Heart left ventricle (tissue), 16 donors: ENCODE measurements at regions of chr1 and their contacts with region 1.

Region 1: GRCh38 chr1:166307261-166308188 is 140.7 kb upstream of the FAM78B start:
- DNase-seq: peak; percentile 56 to 81 (median 67)
- ATAC-seq: peak; percentile 96 to 98 (median 98)
- H3K4me3 ChIP-seq: peak overlapping the region in 2 of 12 donors; percentile 18 to 38
- H3K27ac ChIP-seq: peak overlapping the region; percentile 65 to 89 (median 81)
- H3K4me1 ChIP-seq: peaks cover 0 to 5% (median 0%) of the 10 kb centered on the region in 12 donors
- H3K27me3 ChIP-seq: no peaks in the 10 kb centered on the region
- CTCF ChIP-seq: no peak
- POLR2A ChIP-seq: no peak

Region 2: GRCh38 chr1:165928075-165928731 is 379.3 kb before region 1 on chr1:
- intact Hi-C with region 1: loop called in 1 of 10 experiments (anchors 10 kb)
- DNase-seq: peak in 1 of 5 donors; percentile 38
- ATAC-seq: peak in 2 of 4 donors; percentile 11 to 47
- H3K4me3 ChIP-seq: no peak overlapping the region
- H3K27ac ChIP-seq: no peak overlapping the region
- H3K4me1 ChIP-seq: no peaks in the 10 kb centered on the region
- H3K27me3 ChIP-seq: peaks cover 0 to 4% (median 0%) of the 10 kb centered on the region in 9 donors
- CTCF ChIP-seq: peak; percentile 39 to 74 (median 62)
- POLR2A ChIP-seq: no peak

Region 3: DNA sequence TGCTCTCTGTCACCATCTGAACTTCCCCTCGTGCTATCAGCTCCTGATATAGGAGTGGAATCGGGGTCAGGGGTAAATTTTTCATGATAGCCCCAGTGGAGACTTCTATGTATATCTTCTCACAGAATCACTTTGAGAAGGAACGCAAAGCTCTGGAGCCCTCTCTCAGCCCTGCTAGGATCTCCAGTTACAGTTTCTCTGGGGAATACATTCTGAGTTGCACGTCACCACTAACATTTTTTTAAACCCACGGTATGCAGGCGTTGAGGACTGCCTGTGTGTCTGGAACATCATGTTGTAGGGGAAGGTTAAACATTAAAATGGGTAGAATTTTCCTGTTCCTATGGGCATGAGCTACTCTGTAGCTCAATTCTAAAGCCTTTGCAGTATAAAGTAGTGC is 24.3 kb before region 1 on chr1:
- intact Hi-C with region 1: loop called in 1 of 10 experiments (anchors 1 kb)
- DNase-seq: no peak
- ATAC-seq: peak in 3 of 4 donors; percentile 11 to 69 (median 67)
- H3K4me3 ChIP-seq: no peak overlapping the region
- H3K27ac ChIP-seq: no peak overlapping the region
- H3K4me1 ChIP-seq: peaks cover 0 to 18% (median 0%) of the 10 kb centered on the region in 12 donors
- H3K27me3 ChIP-seq: no peaks in the 10 kb centered on the region
- CTCF ChIP-seq: no peak
- POLR2A ChIP-seq: no peak

Region 4: DNA sequence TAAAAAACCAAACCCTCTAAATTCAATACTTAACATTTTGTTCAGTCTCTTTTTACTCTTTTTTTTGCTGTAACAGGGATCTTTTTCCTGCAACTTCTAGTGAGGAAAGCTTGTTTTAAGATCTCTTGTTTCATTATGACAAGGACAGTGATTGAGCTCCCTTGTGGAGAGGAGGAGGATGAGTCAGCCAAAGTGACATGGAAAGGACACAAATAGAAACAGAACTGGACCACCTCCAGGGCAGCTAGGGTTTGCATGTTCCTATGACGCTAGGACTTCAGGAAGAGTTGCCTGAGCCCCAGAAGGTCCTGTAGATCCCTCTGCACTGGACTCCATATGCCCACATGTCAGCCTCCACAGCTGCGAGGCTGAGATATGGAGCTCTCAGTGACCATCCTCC is 71.9 kb after region 1 on chr1:
- intact Hi-C with region 1: loop called in 2 of 10 experiments (anchors 2 to 5 kb)
- DNase-seq: peak in 4 of 5 donors; percentile 66 to 74 (median 72)
- ATAC-seq: peak; percentile 91 to 98 (median 98)
- H3K4me3 ChIP-seq: no peak overlapping the region
- H3K27ac ChIP-seq: peak overlapping the region in 11 of 12 donors; percentile 9 to 75 (median 48)
- H3K4me1 ChIP-seq: peaks cover 0 to 11% (median 0%) of the 10 kb centered on the region in 12 donors
- H3K27me3 ChIP-seq: no peaks in the 10 kb centered on the region
- CTCF ChIP-seq: no peak
- POLR2A ChIP-seq: no peak

Region 5: DNA sequence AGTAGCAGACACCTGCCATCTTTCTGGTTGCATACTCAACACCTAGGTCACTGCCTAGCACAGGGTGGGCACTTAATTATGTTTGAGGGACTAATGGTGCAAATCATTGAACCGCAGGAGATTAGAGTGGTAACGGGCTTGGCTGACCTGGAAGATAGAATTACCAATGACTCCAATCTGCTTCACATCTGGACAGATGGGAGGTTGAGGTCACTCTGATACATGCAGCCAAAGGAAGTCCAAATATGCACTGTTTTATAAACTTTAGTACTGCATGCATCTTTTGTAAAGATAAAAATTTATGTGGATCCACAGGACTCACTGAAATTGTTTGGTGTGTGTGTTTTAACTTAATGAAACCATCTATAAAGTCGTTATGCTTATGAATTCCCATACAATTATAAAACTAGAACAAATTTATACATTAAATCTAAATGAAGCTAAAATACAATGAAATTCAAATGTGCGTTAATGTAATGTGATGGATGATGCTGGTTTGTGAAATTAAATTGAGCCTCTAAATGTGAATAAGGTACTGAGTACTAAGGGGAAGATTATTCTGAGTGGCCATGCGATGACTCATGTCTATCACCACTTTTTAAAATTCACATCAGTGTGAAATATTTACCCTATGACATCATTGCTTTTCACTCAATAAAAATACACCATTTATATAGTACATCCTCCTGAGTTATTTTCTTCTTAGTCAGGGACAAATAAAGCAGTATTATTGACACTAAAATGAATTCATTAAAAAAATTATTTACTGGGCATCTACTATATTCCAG is 83.9 kb after region 1 on chr1:
- intact Hi-C with region 1: loop called in 1 of 10 experiments (anchors 5 kb)
- DNase-seq: no peak
- ATAC-seq: peak in 1 of 4 donors; percentile 63
- H3K4me3 ChIP-seq: no peak overlapping the region
- H3K27ac ChIP-seq: no peak overlapping the region
- H3K4me1 ChIP-seq: no peaks in the 10 kb centered on the region
- H3K27me3 ChIP-seq: no peaks in the 10 kb centered on the region
- CTCF ChIP-seq: no peak
- POLR2A ChIP-seq: no peak